ENCODE measurements at regions of chr3 and their contacts with region 1.

Region 1: GRCh38 chr3:155701882-155702465 is 42.9 kb downstream of the PLCH1 start:
- DNase-seq: peak; percentile 32
- H3K4me3 ChIP-seq: no peak overlapping the region
- H3K27ac ChIP-seq: no peak overlapping the region
- H3K4me1 ChIP-seq: peaks cover 22% of the 10 kb centered on the region
- H3K27me3 ChIP-seq: no peaks in the 10 kb centered on the region
- CTCF ChIP-seq: peak; percentile 54 to 61

Region 2: DNA sequence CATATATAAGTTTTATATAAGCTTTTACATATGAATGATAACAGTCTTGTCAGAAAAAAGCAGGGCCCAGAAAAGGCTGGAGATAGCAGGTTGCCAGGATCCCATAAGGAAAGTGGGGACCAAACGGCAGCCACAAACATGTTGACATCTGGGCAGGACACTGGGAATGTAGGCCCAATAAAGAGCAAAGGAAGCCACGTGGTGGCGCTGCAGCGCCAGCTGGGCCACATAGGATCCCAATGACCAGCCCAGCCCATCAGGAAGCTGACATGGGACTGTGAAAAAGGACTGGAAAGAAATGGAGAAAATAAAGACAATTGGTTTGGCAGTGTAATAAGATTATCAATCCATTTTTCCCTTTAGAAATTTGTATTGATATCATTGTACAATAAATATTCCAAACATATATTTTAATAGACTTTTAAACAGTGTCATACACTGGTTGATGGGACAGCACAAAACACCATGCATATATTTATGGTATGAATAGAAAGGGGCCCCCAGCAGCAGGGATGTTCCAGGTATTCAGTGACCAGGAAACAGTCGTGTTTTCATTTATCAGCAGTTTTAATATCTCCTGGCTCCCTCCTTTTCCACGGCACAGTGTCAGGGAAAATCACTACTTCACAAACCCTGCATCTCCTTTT is 319.5 kb before region 1 on chr3:
- CTCF ChIA-PET with region 1: interaction called, 45 read pairs
- dilution Hi-C with region 1: loop called (anchors 25 kb)
- in situ Hi-C with region 1: loop called (anchors 5 kb)
- intact Hi-C with region 1: loop called (anchors 1 kb)
- DNase-seq: peak; percentile 52
- H3K4me3 ChIP-seq: no peak overlapping the region
- H3K27ac ChIP-seq: no peak overlapping the region
- H3K4me1 ChIP-seq: peaks cover 6% of the 10 kb centered on the region
- H3K27me3 ChIP-seq: no peaks in the 10 kb centered on the region
- CTCF ChIP-seq: peak; percentile 81 to 94

Region 3: DNA sequence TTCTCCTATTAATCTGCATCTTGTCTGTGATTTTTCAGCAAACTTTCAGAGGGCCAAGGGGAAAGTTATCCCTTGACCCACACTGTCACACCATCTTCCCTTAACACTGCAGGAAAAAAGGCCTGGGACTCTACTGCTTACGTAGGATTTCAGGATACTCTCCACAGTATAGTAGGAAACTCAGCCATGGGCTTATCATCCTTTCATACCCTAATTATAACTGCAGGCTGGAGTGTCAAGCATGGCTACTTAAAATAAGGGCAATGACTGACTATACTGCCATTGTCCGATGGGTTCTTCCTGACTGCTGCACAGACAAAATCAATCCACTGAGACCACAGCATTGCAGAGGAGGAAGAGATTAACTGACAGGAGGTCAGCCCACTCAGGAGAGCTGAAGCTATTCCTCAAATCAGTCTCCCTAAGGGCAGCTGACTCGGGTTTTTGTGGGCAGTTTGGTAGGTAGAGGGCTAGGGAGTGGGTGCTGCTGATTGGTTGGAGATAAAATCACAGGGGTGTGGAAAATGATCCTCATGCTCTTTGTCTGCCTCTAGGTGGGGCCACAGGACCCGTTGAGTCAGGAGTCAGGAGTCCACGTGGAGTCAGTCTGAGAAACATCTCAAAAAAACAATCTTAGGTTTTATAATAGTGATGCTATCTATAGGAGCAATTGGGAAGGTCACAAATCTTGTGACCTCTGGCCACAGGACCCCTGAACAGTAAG is 290.3 kb before region 1 on chr3:
- CTCF ChIA-PET with region 1: no interaction called
- dilution Hi-C with region 1: no loop called
- in situ Hi-C with region 1: no loop called
- intact Hi-C with region 1: loop called (anchors 1 kb)
- DNase-seq: peak; percentile 6
- H3K4me3 ChIP-seq: no peak overlapping the region
- H3K27ac ChIP-seq: no peak overlapping the region
- H3K4me1 ChIP-seq: peaks cover 13% of the 10 kb centered on the region
- H3K27me3 ChIP-seq: no peaks in the 10 kb centered on the region
- CTCF ChIP-seq: peak; percentile 7 to 31

Region 4: DNA sequence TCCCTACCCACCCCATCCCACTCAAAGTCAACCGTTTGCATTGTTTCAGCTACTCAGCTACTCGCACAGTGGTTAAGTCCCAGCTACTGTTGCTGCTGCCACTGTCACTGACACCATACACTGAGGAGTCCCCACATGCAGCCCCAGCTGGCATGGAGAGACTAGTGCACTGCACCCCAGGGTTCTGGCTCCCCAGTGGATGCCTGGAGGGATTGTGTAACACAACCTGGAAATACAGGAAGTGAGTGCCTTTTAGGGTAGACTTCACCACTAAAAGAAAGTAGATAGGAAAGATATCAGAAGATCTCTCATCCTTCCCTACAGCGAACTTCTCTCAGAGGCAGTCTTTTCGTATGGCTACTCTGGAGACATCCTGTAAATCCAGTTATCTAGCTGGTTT is 239.3 kb before region 1 on chr3:
- CTCF ChIA-PET with region 1: no interaction called
- dilution Hi-C with region 1: no loop called
- in situ Hi-C with region 1: no loop called
- intact Hi-C with region 1: no loop called
- DNase-seq: no peak
- H3K4me3 ChIP-seq: no peak overlapping the region
- H3K27ac ChIP-seq: no peak overlapping the region
- H3K4me1 ChIP-seq: no peaks in the 10 kb centered on the region
- H3K27me3 ChIP-seq: no peaks in the 10 kb centered on the region
- CTCF ChIP-seq: no peak

Region 5: GRCh38 chr3:155846119-155846518 is 144.1 kb after region 1 on chr3:
- CTCF ChIA-PET with region 1: no interaction called
- dilution Hi-C with region 1: no loop called
- in situ Hi-C with region 1: no loop called
- intact Hi-C with region 1: no loop called
- DNase-seq: no peak
- H3K4me3 ChIP-seq: no peak overlapping the region
- H3K27ac ChIP-seq: no peak overlapping the region
- H3K4me1 ChIP-seq: peaks cover 2% of the 10 kb centered on the region
- H3K27me3 ChIP-seq: no peaks in the 10 kb centered on the region
- CTCF ChIP-seq: no peak